ENCODE measurements at regions of chr4 and their contacts with region 1.

Region 1: GRCh38 chr4:38870098-38870808 is 2.6 kb downstream of the FAM114A1 start:
- DNase-seq: no peak
- H3K4me3 ChIP-seq: no peak overlapping the region
- H3K4me3 Mint-ChIP-seq: no peak overlapping the region
- H3K27ac Mint-ChIP-seq: no peak overlapping the region
- H3K4me1 ChIP-seq: peaks cover 8% of the 10 kb centered on the region
- H3K4me1 Mint-ChIP-seq: peaks cover 12% of the 10 kb centered on the region
- H3K27me3 ChIP-seq: no peaks in the 10 kb centered on the region
- H3K27me3 Mint-ChIP-seq: no peaks in the 10 kb centered on the region
- CTCF ChIP-seq: no peak

Region 2: GRCh38 chr4:39083164-39083563 is 212.9 kb after region 1 on chr4:
- CTCF ChIA-PET with region 1: no interaction called
- POLR2A ChIA-PET with region 1: no interaction called
- intact Hi-C with region 1: no loop called
- DNase-seq: no peak
- H3K4me3 ChIP-seq: no peak overlapping the region
- H3K4me3 Mint-ChIP-seq: no peak overlapping the region
- H3K27ac Mint-ChIP-seq: no peak overlapping the region
- H3K4me1 ChIP-seq: no peaks in the 10 kb centered on the region
- H3K4me1 Mint-ChIP-seq: no peaks in the 10 kb centered on the region
- H3K27me3 ChIP-seq: no peaks in the 10 kb centered on the region
- H3K27me3 Mint-ChIP-seq: no peaks in the 10 kb centered on the region
- CTCF ChIP-seq: no peak

Region 3: GRCh38 chr4:39154009-39154408 is 283.8 kb after region 1 on chr4:
- CTCF ChIA-PET with region 1: no interaction called
- POLR2A ChIA-PET with region 1: no interaction called
- intact Hi-C with region 1: no loop called
- DNase-seq: no peak
- H3K4me3 ChIP-seq: no peak overlapping the region
- H3K4me3 Mint-ChIP-seq: no peak overlapping the region
- H3K27ac Mint-ChIP-seq: no peak overlapping the region
- H3K4me1 ChIP-seq: no peaks in the 10 kb centered on the region
- H3K4me1 Mint-ChIP-seq: no peaks in the 10 kb centered on the region
- H3K27me3 ChIP-seq: no peaks in the 10 kb centered on the region
- H3K27me3 Mint-ChIP-seq: no peaks in the 10 kb centered on the region
- CTCF ChIP-seq: no peak

Region 4: DNA sequence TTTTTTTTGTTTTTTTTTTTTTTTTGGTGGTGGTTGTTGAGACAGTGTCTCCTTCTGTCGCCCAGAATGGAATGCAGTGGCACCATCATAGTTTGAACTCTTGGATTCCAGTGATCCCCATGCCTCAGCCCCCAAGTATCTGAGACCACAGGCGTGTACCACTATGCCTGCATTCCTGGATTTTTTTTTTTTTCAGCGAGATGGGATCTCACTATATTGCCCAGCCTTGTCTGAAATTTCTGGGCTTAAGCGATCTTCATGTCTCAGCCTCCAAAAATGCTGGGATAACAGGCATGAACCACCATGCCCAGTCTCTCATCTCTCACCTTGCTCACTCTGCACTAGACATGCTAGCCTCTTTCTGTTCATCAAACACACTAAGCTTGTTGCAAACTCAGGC is 931.7 kb after region 1 on chr4:
- CTCF ChIA-PET with region 1: no interaction called
- POLR2A ChIA-PET with region 1: interaction called, 13 read pairs
- intact Hi-C with region 1: no loop called
- DNase-seq: no peak
- H3K4me3 ChIP-seq: no peak overlapping the region
- H3K4me3 Mint-ChIP-seq: no peak overlapping the region
- H3K27ac Mint-ChIP-seq: no peak overlapping the region
- H3K4me1 ChIP-seq: 0 out of 2 replicates have a peak, but pooled peaks cover 3% of the 10 kb centered on the region
- H3K4me1 Mint-ChIP-seq: peaks cover 8% of the 10 kb centered on the region
- H3K27me3 ChIP-seq: no peaks in the 10 kb centered on the region
- H3K27me3 Mint-ChIP-seq: no peaks in the 10 kb centered on the region
- CTCF ChIP-seq: no peak